ENCODE measurements at regions of chrX and their contacts with region 1.

Region 1: DNA sequence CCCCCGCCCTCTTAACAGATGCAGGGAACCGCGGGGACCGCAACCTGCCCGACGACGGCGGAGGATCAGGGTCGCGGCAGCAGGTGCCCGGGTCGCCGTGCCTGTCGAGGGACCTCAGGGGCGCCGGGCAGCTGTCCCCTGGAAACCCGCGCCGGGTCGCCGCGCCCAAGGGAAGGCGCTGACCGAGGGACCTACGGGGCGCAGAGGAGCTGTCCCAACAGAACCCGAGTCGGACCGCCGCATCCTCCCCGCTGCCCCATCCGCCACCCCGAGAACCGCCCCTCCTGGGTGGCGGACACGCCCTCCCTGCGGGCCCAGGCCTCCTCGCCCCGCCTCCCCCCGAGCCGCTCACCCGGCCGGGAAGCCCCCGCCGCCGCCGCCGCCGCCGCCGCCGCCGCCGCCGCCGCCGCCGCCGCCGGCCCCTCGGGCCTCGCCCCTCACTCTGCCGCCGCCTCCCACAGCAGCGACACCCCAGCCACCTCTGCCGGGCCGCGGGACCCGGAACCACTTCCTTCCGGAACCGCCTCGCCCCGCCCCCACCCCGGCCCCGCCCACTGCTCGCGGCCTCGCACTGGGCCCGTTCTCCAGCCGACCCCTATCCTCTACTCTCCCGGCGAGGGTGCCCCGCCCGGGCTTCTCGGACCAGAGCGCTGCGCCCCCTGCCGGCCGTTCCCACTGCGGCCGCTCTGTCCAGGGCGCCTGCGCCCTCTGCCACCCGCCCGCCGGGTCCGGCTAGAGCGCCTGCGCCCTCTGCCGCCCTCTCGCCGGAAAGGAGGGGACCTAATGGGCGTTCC is at the start of gene BCLAF3:
- DNase-seq: peak; percentile 92
- H3K4me3 Mint-ChIP-seq: peak within 1 kb of the TSS; percentile 87
- H3K27ac Mint-ChIP-seq: peak within 1 kb of the TSS; percentile 87
- H3K4me1 Mint-ChIP-seq: peaks cover 10% of the 10 kb centered on the region
- H3K27me3 Mint-ChIP-seq: no peaks in the 10 kb centered on the region
- total RNA-seq, gene BCLAF3: 4.0 to 4.1 TPM

Region 2: DNA sequence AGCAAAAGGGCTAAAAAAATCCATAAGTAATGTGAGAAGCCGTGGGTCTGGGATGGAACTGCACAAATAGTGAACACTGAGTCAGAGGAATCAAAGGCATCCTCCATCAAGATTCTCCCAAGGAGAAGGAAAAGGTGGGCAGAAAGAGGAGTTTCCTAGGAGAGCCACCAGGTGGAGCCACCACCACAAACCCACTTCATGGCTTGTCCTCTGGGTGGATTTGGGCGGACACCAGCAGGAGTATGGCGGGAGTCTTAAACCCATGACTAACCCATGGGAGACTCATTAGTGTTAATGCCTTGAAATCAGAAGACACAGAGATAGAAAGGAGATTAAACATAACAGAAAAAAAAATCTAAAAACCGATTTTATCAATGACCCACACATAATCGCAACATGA is 251.1 kb before region 1 on chrX:
- CTCF ChIA-PET with region 1: no interaction called
- POLR2A ChIA-PET with region 1: no interaction called
- intact Hi-C with region 1: loop called (anchors 10 kb)
- DNase-seq: peak; percentile 63
- H3K4me3 Mint-ChIP-seq: no peak overlapping the region
- H3K27ac Mint-ChIP-seq: peak overlapping the region; percentile 74
- H3K4me1 Mint-ChIP-seq: peaks cover 76% of the 10 kb centered on the region
- H3K27me3 Mint-ChIP-seq: no peaks in the 10 kb centered on the region

Region 3: GRCh38 chrX:19904778-19905367 is 85.9 kb before region 1 on chrX:
- CTCF ChIA-PET with region 1: interaction called, 15 read pairs
- POLR2A ChIA-PET with region 1: no interaction called
- intact Hi-C with region 1: loop called (anchors 1 kb)
- DNase-seq: peak; percentile 15
- H3K4me3 Mint-ChIP-seq: no peak overlapping the region
- H3K27ac Mint-ChIP-seq: no peak overlapping the region
- H3K4me1 Mint-ChIP-seq: peaks cover 15% of the 10 kb centered on the region
- H3K27me3 Mint-ChIP-seq: no peaks in the 10 kb centered on the region

Region 4: GRCh38 chrX:19926095-19926494 is 64.7 kb before region 1 on chrX:
- CTCF ChIA-PET with region 1: no interaction called
- POLR2A ChIA-PET with region 1: no interaction called
- intact Hi-C with region 1: loop called (anchors 1 kb)
- DNase-seq: no peak
- H3K4me3 Mint-ChIP-seq: no peak overlapping the region
- H3K27ac Mint-ChIP-seq: no peak overlapping the region
- H3K4me1 Mint-ChIP-seq: no peaks in the 10 kb centered on the region
- H3K27me3 Mint-ChIP-seq: no peaks in the 10 kb centered on the region

Region 5: GRCh38 chrX:19964017-19964710 is 26.6 kb before region 1 on chrX:
- CTCF ChIA-PET with region 1: no interaction called
- POLR2A ChIA-PET with region 1: no interaction called
- intact Hi-C with region 1: loop called (anchors 2 kb)
- DNase-seq: peak; percentile 65
- H3K4me3 Mint-ChIP-seq: no peak overlapping the region
- H3K27ac Mint-ChIP-seq: no peak overlapping the region
- H3K4me1 Mint-ChIP-seq: peaks cover 18% of the 10 kb centered on the region
- H3K27me3 Mint-ChIP-seq: no peaks in the 10 kb centered on the region

Region 6: DNA sequence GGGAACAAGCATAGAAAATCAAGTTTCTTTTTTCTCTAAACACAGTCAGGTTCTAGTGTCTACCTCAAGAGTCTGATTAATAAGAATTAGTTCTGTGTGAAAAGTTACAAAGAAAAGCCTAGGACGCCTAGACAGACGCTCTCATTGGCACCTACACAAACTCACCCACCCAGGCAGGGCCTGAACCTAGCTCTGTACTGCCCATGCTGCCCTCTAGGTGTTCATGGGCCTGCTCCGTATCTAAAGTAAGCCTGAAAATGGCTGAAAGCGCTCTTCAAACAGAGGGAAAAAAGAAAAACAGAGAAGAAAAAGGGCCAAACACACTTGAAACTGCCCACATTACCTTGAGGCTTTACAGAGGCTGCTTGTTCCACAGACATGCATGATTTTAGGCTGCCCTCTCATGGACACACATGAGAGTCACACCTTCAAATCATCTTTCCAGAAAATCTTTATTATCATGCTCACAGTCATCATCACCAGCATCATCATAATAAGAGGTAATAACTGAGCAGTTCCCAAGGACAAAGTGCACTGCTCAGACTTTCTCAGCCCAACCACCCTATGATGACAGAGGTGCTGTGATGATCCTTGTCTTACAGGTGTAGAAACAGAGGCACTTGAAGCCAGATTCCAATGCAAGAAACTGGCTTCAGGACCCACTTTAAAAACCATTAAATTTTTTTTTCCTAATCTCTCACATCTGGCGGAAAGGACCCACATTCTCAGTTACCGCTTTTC is 76.4 kb after region 1 on chrX:
- CTCF ChIA-PET with region 1: no interaction called
- POLR2A ChIA-PET with region 1: no interaction called
- intact Hi-C with region 1: loop called (anchors 1 kb)
- DNase-seq: peak; percentile 13
- H3K4me3 Mint-ChIP-seq: no peak overlapping the region
- H3K27ac Mint-ChIP-seq: no peak overlapping the region
- H3K4me1 Mint-ChIP-seq: no peaks in the 10 kb centered on the region
- H3K27me3 Mint-ChIP-seq: no peaks in the 10 kb centered on the region